H1 (cell line): ENCODE measurements at regions of chr10 and their contacts with region 1.

Region 1: DNA sequence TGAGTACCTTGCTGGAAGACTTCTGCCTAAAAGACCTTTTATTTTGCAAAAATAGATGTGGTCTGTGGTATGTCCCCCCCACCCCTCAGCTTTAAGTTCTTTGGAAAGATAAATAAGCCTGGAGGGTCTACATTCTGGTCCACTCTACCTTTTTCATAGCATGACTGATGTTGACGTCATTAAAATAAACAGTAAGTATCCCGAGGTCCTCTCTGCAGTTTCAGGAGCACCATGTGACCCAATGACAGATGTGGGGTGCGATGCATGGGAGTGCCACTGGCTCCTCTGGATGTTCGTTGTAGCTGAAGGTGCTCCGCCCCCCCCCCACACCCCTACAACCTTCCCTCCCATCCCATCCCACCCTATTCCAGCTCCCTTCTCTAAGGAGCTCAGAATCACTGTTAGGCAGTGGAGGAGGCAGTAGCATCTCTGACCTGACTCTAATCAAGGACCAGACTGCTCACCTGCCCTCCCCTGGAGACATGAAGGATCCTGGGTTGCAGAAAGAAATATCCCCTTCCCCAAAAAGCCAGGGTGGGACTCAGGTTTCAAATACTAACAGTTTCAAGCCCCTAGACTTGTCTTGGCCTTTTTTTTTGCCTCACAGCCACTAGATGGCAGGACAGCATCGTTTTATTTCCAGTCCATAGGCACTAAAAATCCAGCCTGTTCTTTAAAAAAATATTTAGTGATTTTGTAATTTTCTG is 25.1 kb downstream of the CASP7 start:
- DNase-seq: no peak
- H3K4me3 ChIP-seq: no peak overlapping the region
- H3K27ac ChIP-seq: no peak overlapping the region
- H3K4me1 ChIP-seq: peaks cover 0 to 8% (median 5%) of the 10 kb centered on the region in 4 experiments; a peak in 4 of 7 replicates
- H3K27me3 ChIP-seq: no peaks in the 10 kb centered on the region
- CTCF ChIP-seq: peak in 2 of 3 experiments; percentile 51 to 61; a peak in 3 of 4 replicates
- EP300 ChIP-seq: no peak
- POLR2A ChIP-seq: no peak
- RAD21 ChIP-seq: peak; percentile 69 to 72

Region 2: GRCh38 chr10:113716109-113716910 is 11.5 kb after region 1 on chr10:
- CTCF ChIA-PET with region 1: interaction called, 29 read pairs
- POLR2A ChIA-PET with region 1: no interaction called
- DNase-seq: no peak
- H3K4me3 ChIP-seq: no peak overlapping the region
- H3K27ac ChIP-seq: no peak overlapping the region
- H3K4me1 ChIP-seq: peaks cover 3 to 9% (median 8%) of the 10 kb centered on the region in 4 experiments; a peak in 6 of 7 replicates
- H3K27me3 ChIP-seq: no peaks in the 10 kb centered on the region
- CTCF ChIP-seq: no peak
- EP300 ChIP-seq: no peak
- POLR2A ChIP-seq: no peak
- RAD21 ChIP-seq: no peak

Region 3: GRCh38 chr10:113732966-113733365 is 28.2 kb after region 1 on chr10:
- CTCF ChIA-PET with region 1: interaction called, 12 read pairs
- POLR2A ChIA-PET with region 1: no interaction called
- DNase-seq: no peak
- H3K4me3 ChIP-seq: no peak overlapping the region
- H3K27ac ChIP-seq: no peak overlapping the region
- H3K4me1 ChIP-seq: peaks cover 0 to 2% (median 0%) of the 10 kb centered on the region in 4 experiments; a peak in 1 of 7 replicates
- H3K27me3 ChIP-seq: no peaks in the 10 kb centered on the region
- CTCF ChIP-seq: no peak
- EP300 ChIP-seq: no peak
- POLR2A ChIP-seq: no peak
- RAD21 ChIP-seq: no peak